ENCODE measurements at regions of chr13 and their contacts with region 1.

Region 1: GRCh38 chr13:76991796-76992547 is at the start of gene CLN5:
- DNase-seq: peak; percentile 95
- H3K4me3 Mint-ChIP-seq: peak within 1 kb of the TSS; percentile 97
- H3K27ac Mint-ChIP-seq: peak within 1 kb of the TSS; percentile 98
- H3K4me1 Mint-ChIP-seq: peaks cover 42% of the 10 kb centered on the region
- H3K27me3 Mint-ChIP-seq: peaks cover 7% of the 10 kb centered on the region
- total RNA-seq, gene CLN5: 14.2 and 16.9 TPM in 2 replicates

Region 2: GRCh38 chr13:75326173-75327134 is 1665.5 kb before region 1 on chr13:
- intact Hi-C with region 1: loop called (anchors 10 kb)
- DNase-seq: peak; percentile 46
- H3K4me3 Mint-ChIP-seq: peak overlapping the region; percentile 83
- H3K27ac Mint-ChIP-seq: peak overlapping the region; percentile 96
- H3K4me1 Mint-ChIP-seq: peaks cover 48% of the 10 kb centered on the region
- H3K27me3 Mint-ChIP-seq: no peaks in the 10 kb centered on the region

Region 3: DNA sequence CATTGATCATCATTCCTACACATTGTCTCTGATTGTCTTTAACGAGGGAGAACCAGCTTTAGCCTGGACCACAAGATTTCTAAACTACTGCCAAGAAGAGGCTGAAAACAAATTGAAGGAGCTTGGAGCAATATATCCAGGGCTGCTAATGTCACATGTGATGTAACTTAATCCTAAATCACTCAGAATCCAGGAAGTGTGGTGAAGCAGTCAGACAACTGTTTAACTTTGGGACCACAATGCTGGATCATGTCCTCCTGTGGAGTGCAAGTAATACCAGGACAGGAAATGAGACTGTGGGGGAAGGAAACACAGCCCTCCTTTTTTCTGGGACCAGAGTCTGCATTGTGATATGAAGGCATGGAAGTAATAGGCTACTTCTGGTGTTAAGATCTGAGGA is 536.0 kb before region 1 on chr13:
- intact Hi-C with region 1: no loop called
- DNase-seq: no peak
- H3K4me3 Mint-ChIP-seq: no peak overlapping the region
- H3K27ac Mint-ChIP-seq: no peak overlapping the region
- H3K4me1 Mint-ChIP-seq: no peaks in the 10 kb centered on the region
- H3K27me3 Mint-ChIP-seq: no peaks in the 10 kb centered on the region

Region 4: GRCh38 chr13:76886292-76887075 is 105.5 kb before region 1 on chr13 and contains the start of gene KCTD12:
- intact Hi-C with region 1: loop called (anchors 1 kb)
- DNase-seq: peak; percentile 60
- H3K4me3 Mint-ChIP-seq: peak within 1 kb of the TSS; percentile 90
- H3K27ac Mint-ChIP-seq: peak within 1 kb of the TSS; percentile 85
- H3K4me1 Mint-ChIP-seq: peaks cover 28% of the 10 kb centered on the region
- H3K27me3 Mint-ChIP-seq: peaks cover 28% of the 10 kb centered on the region
- total RNA-seq, gene KCTD12: 10.4 and 10.7 TPM in 2 replicates

Region 5: DNA sequence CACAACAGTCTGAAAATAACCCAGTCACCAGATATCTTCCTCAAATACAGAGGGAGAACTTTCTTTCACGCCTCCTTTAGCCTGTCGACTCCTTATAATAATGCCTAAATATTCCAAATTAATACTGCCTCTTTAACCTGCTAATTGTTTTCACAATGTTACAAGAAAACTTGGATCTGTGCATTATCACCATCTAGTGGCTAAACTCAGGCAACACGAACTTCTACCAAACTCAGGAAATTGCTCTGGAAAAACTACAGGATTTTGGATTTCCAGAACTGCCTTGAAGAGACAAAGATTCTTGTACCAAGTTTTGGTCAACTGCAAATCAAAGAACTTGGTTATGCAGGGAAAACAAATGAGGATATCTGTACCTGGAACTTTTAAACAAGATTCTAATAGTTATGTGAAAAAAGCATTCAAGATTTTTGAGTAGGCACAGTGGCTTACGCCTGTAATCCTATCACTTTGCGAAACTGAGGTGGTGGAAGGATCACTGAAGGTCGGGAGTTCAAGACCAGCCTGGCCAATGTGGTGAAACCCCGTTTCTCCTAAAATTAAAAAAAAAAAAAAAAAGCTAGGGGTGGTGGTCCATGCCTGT is 10.7 kb after region 1 on chr13:
- intact Hi-C with region 1: loop called (anchors 1 kb)
- DNase-seq: no peak
- H3K4me3 Mint-ChIP-seq: no peak overlapping the region
- H3K27ac Mint-ChIP-seq: peak overlapping the region; percentile 62
- H3K4me1 Mint-ChIP-seq: peaks cover 20% of the 10 kb centered on the region
- H3K27me3 Mint-ChIP-seq: no peaks in the 10 kb centered on the region

Region 6: DNA sequence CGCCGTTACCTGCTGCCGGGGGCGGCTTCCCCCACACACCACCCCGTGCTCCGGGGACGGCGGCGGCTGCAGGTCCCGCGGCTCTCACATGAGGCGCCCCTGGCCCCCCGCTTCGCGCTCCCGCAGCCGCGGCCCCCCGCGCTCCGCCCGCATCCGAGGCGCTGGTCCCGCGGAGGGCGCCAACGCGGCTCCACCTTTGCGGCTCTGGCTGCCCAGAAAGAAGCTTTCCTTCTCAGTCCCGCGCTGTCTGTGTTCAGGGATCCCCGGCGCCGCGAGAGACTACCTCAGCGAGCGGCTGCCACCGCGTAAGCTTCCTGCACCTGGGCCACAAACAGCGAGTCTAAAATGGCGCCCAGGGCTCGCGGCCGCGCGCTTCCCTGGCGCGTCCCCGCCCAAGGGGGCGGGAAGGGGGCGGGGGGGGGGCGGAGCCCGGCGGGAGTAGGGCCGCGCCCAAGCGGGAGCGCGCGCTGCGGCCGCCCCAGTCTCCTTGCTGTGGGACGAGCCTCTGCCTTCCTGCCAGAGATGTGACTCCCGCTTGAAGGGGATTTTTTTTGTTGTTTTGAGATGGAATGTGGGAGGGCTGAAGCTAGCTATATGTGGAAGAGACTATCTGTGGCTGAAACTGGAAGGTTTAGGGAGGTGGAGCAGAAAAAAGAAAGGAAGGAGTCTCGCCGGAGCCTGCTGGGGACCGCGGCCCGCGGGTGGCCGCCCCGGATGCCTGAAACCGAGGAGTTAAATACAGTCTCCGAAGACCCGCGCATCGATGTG is 35.0 kb after region 1 on chr13 and contains the start of gene FBXL3:
- intact Hi-C with region 1: loop called (anchors 1 kb)
- DNase-seq: peak; percentile 78
- H3K4me3 Mint-ChIP-seq: peak within 1 kb of the TSS; percentile 94
- H3K27ac Mint-ChIP-seq: peak within 1 kb of the TSS; percentile 93
- H3K4me1 Mint-ChIP-seq: peaks cover 58% of the 10 kb centered on the region
- H3K27me3 Mint-ChIP-seq: no peaks in the 10 kb centered on the region
- total RNA-seq, gene FBXL3: 40.1 and 40.8 TPM in 2 replicates

Region 7: DNA sequence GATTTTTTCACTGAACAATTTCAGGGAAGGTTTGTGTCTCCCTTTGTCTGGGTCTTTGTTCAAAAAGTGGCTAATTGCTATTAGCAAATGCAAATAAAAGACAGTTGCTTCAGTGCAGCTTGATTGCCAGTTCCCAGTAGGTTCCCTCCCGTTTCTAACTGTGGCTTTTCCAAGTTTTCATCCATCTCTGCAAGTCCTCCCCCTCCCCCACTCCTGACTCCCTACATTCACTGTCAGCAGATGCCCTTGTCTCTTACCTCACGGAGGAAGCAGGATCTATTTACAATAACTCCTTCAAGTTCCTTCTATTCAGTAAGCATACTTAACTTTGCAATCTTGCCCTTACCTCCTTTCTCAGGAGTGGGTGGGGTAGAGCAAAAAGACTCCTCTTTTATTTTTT is 488.1 kb after region 1 on chr13:
- intact Hi-C with region 1: loop called (anchors 2 kb)
- DNase-seq: no peak
- H3K4me3 Mint-ChIP-seq: no peak overlapping the region
- H3K27ac Mint-ChIP-seq: no peak overlapping the region
- H3K4me1 Mint-ChIP-seq: peaks cover 17% of the 10 kb centered on the region
- H3K27me3 Mint-ChIP-seq: peaks cover 6% of the 10 kb centered on the region

Region 8: DNA sequence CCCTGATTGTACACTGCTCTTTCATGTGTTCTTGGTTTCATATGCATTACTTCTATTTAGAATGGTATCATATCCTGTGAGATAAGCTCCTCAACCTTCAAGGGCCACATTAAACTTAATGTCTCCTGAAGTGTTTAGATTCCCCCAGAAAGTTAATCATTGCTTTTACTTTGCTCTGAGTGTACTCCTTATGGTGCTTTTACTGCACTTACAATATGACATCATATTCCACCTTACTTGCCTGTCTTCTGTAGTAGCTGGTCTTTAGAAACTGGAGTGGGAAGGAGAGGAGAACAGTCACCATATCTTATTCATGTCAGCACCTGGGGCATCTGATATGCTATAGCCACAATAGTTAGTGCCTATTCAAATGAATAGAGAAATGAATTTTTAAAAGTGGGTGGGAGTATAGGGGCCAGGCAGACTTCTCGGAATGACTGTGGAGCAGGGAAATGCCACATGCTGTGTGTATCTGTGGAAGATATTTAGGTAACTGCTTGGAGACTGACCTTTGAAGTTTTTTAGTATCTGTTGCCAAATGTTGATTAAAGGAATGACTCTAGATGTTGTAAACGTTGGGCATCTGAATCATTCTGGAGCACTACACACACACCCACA is 745.7 kb after region 1 on chr13:
- intact Hi-C with region 1: loop called (anchors 1 kb)
- DNase-seq: no peak
- H3K4me3 Mint-ChIP-seq: no peak overlapping the region
- H3K27ac Mint-ChIP-seq: no peak overlapping the region
- H3K4me1 Mint-ChIP-seq: peaks cover 13% of the 10 kb centered on the region
- H3K27me3 Mint-ChIP-seq: no peaks in the 10 kb centered on the region